ENCODE measurements at regions of chr11 and their contacts with region 1.

Region 1: DNA sequence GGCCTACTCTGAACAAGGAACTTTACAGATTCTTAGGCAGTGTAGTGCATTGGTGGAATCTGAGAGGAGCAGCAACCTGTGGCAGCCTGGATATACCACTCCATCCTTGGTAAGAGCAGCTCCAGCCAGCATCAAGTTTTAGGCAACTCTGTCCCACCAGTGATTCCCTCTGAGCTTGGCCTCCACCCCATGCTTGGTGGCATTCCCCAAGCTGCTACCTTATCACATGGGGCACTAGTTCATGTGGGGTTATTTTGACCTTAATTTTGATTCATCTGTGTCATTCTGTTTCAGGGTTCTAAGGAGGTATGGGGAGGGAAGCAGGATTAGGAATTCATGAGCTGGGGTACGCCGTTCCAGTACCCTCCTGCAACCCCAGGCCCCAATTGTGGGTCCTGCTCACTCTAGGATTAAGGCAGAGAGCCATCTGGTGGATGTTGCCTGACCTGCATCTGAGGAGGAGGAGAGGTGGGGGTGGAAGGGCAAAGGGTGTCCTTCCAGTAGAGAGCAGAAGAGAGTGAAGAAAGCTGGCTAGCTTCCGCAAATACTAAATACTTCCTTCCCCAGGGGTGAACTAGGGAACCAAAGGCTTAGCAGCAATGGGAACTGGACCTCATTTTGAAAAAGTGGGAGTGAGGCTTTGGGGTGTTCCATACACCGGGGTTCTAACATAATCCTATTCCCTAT is 10.5 kb downstream of the LRRC51 start:
- DNase-seq: peak; percentile 83
- H3K4me3 Mint-ChIP-seq: no peak overlapping the region
- H3K27ac Mint-ChIP-seq: no peak overlapping the region
- H3K4me1 Mint-ChIP-seq: peaks cover 14% of the 10 kb centered on the region
- H3K27me3 Mint-ChIP-seq: no peaks in the 10 kb centered on the region

Region 2: DNA sequence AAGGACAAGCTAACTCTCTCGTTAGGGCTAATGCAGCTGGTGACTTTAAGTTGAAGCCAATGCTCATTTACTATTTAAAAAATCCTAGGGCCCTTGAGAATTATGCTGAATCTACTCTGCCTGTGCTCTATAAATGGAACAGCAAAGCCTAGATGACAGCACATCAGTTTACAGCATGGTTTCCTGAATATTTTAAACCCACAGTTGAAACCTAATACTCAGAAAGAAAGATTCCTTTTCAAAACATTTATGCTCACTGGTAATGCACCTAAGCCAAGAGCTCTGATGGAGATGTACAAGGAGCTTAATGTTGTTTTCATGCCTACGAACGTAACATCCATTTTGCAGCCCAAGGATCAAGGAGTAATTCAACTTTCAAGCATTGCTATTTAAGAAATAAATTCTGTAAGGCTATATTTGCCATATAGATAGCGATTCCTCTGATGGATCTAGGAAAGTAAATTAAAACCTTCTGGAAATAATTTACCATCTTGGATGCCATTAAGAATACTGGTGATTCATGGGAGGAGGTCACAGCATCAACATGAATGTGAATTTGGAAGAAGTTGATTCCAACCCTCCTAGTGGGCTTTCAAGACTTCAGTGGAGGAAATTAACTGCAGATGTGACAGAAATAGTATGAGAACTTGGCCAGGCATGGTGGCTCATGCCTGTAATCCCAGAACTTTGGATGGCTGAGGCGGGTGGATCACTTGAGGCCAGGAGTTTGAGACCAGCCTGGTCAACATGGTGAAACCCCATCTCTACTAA is 177.2 kb before region 1 on chr11:
- CTCF ChIA-PET with region 1: interaction called, 3 read pairs
- intact Hi-C with region 1: loop called (anchors 2 kb)
- DNase-seq: no peak
- H3K4me3 Mint-ChIP-seq: no peak overlapping the region
- H3K27ac Mint-ChIP-seq: no peak overlapping the region
- H3K4me1 Mint-ChIP-seq: peaks cover 15% of the 10 kb centered on the region
- H3K27me3 Mint-ChIP-seq: no peaks in the 10 kb centered on the region

Region 3: GRCh38 chr11:72030472-72031045 is 60.6 kb before region 1 on chr11:
- CTCF ChIA-PET with region 1: interaction called, 162 read pairs
- intact Hi-C with region 1: loop called (anchors 1 kb)
- DNase-seq: no peak
- H3K4me3 Mint-ChIP-seq: no peak overlapping the region
- H3K27ac Mint-ChIP-seq: peak overlapping the region; percentile 13
- H3K4me1 Mint-ChIP-seq: peaks cover 42% of the 10 kb centered on the region
- H3K27me3 Mint-ChIP-seq: no peaks in the 10 kb centered on the region

Region 4: GRCh38 chr11:72040726-72041441 is 50.3 kb before region 1 on chr11:
- CTCF ChIA-PET with region 1: interaction called, 11 read pairs
- intact Hi-C with region 1: no loop called
- DNase-seq: peak; percentile 85
- H3K4me3 Mint-ChIP-seq: no peak overlapping the region
- H3K27ac Mint-ChIP-seq: no peak overlapping the region
- H3K4me1 Mint-ChIP-seq: peaks cover 44% of the 10 kb centered on the region
- H3K27me3 Mint-ChIP-seq: no peaks in the 10 kb centered on the region

Region 5: DNA sequence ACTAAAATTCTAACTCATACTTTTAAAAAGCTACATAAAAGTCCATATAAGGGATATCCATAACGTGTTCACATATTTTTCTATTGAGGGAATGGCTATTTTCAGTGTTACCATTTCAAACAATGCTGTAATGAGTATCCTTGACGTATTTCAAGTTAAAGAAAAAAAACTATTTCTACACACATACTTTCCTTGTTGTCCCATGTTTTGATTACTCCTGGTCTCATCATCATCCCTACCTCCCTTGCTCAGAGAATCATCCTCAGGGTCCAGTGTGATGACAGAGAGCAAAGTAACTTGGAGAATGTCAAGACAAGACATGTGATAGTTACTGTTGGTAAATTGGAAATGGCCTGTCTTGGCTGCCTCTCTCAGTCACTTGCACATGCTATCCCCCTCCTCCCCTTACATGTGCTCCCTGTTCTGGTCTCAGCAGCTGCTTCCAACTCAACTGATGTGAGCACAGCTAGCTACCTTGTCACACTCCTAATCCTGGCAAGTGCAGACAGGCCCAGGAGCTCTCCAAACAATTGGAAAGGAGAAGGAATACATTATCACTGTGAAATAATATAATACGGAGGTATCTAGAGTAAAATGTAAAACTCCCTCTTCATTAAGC is 32.6 kb before region 1 on chr11:
- CTCF ChIA-PET with region 1: no interaction called
- intact Hi-C with region 1: no loop called
- DNase-seq: no peak
- H3K4me3 Mint-ChIP-seq: no peak overlapping the region
- H3K27ac Mint-ChIP-seq: no peak overlapping the region
- H3K4me1 Mint-ChIP-seq: peaks cover 8% of the 10 kb centered on the region
- H3K27me3 Mint-ChIP-seq: no peaks in the 10 kb centered on the region

Region 6: DNA sequence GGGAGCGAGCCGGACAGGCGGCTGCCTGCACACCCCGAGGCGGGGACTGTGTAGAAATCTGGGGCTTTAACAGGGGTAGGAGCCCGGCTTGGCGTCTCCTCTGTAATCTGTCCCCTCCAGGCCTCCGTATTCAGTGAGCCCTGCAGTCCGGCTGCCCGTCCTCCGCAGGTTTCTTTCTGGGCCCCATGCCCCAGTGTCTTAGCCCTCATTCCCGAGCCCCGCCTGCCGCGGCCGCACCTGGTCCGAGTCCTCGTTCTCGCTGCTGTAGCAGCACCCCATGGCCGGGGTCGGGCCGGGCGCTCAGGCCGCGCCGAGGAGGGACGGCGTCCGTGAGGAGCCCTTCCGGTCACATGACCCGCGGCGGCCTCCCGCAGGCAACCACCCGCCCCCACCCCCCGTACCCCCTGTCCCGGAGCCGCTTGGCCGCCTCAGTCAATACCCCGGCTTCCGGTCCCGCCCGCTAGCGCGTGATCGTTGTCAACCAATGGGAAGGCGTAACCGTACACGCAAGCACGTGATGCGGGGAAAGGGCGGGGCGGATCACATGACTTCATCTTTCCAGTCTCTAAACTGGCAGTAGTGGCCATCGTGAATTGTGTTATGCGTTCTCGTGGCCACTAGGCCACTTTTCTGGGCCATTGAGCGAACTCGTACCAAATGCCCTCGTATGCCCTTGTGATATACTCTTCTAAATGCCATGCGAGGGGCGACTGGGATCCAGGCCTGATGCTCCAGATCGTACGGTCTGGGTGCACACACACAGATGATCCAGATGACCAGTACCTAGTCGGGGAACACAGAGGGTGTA is 12.0 kb after region 1 on chr11 and contains the start of gene LAMTOR1:
- CTCF ChIA-PET with region 1: interaction called, 38 read pairs
- intact Hi-C with region 1: no loop called
- DNase-seq: peak; percentile 100
- H3K4me3 Mint-ChIP-seq: peak within 1 kb of the TSS; percentile 87
- H3K27ac Mint-ChIP-seq: peak within 1 kb of the TSS; percentile 77
- H3K4me1 Mint-ChIP-seq: peaks cover 36% of the 10 kb centered on the region
- H3K27me3 Mint-ChIP-seq: no peaks in the 10 kb centered on the region
- total RNA-seq, gene LAMTOR1: 39.1 to 41.8 TPM

Region 7: DNA sequence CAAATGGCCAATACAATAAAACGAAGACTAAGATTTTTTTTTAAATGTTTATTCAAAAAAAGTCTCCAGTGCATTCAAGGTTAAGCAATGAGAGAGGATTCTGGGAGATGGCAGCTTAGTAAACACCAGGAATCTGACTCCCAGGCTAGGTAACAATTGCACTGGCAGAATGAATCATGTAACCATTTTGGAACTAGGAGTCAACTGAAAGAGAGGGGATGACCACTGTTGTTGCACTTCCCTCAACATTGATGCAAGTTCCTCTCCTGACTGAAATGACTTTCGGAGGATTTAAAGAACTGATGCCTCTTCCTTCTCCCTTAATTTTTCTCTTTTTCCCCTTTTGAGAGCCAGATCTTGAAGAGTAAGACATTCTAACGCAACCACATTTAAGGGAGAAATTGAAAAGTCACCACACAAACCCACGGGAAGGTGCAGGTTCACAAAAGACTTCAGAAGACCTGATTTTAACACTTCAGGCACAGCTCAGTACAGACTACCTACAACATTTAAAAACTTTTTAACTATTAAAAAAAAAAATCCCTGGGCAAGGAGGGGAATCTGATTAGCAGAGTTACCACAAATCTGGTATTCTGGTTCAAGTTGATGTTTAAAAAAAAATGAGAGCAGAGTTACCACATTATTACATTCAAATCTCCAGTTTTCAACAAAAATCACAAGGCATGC is 994.2 kb after region 1 on chr11:
- CTCF ChIA-PET with region 1: no interaction called
- intact Hi-C with region 1: no loop called
- DNase-seq: no peak
- H3K4me3 Mint-ChIP-seq: no peak overlapping the region
- H3K27ac Mint-ChIP-seq: no peak overlapping the region
- H3K4me1 Mint-ChIP-seq: peaks cover 21% of the 10 kb centered on the region
- H3K27me3 Mint-ChIP-seq: no peaks in the 10 kb centered on the region